Sigmoid colon (tissue), 7 donors: ENCODE measurements at regions of chrX and their contacts with region 1.

Region 1: DNA sequence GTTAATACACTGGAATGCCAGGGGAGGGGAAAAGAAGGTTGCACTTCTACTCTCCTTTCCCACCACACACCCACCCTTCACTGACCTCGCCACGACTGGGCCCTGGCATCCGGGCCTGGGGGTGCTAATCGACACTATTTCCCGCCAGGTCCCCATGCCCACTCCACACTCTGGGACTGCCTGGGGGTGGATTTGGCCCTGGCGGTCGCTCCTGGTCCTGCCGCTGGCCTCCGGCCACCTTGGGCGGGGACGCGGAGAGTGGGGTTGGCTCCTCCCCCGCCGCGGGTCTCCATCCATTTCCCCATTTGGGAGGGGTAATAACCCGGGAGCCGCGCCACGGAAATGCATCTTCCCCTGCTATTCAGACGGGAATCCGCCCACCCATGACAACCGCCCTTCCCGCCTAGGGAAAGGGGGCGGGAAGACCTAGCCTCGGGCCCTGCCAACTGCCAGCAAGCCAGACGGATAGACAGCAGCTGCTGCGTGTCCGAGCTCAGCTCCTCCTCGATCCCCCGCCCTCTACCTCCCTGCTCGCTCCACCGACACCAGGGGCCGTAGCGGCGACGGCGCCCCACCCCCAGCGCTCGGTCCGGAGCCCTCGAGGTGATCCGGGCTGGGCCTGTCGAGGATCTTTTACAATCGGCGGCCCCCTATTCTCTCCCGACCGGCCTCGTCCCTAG is 78.1 kb downstream of the RLIM start:
- DNase-seq: peak; percentile 96
- H3K4me3 ChIP-seq: peak overlapping the region; percentile 35 to 56 (median 49)
- H3K27ac ChIP-seq: peak overlapping the region; percentile 86 to 92 (median 88)
- H3K4me1 ChIP-seq: peaks cover 0 to 18% (median 6%) of the 10 kb centered on the region in 4 donors
- H3K27me3 ChIP-seq: no peaks in the 10 kb centered on the region
- CTCF ChIP-seq: peak; percentile 36 to 60 (median 52)
- EP300 ChIP-seq: no peak
- POLR2A ChIP-seq: no peak

Region 2: DNA sequence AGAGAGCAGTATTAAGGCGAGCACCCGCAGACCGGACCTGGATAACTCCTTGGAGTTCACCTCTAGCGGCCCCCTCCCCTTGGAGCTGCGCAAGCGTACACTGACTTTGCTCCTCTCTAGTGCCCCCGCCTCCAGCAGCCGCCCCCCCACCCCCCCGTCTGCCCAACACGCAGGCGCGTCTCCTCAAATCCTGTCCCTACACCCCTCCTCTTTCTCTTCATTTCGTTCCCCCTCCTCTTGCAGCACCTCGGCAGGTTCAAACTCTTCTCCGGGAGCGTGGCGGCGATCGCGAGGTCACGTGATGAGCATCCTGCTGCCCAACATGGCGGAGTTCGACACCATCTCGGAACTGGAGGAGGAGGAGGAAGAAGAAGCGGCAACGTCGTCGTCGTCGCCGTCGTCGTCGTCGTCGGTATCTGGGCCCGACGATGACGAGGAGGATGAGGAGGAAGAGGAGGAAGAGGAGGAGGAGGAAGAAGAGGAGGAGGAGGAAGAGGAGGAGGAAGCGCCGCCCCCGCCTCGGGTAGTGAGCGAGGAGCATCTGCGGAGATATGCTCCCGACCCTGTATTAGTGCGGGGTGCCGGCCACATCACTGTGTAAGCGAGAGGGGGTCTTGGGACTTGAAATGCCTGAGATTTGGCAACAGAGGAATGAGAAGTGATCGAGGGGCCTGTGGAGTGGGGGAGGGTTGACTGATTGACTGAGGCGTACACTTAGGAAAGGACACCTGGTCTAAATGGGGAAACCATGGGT is 973.1 kb before region 1 on chrX and contains the start of gene CHIC1:
- intact Hi-C with region 1: loop called (anchors 10 kb)
- DNase-seq: peak; percentile 85
- H3K4me3 ChIP-seq: peak within 1 kb of the TSS; percentile 59 to 65 (median 63)
- H3K27ac ChIP-seq: peak within 1 kb of the TSS; percentile 83 to 86 (median 84)
- H3K4me1 ChIP-seq: peaks cover 0 to 9% (median 0%) of the 10 kb centered on the region in 4 donors
- H3K27me3 ChIP-seq: no peaks in the 10 kb centered on the region
- CTCF ChIP-seq: no peak
- EP300 ChIP-seq: no peak
- POLR2A ChIP-seq: no peak
- total RNA-seq, gene CHIC1: 18.3 to 20.7 (median 19.8) TPM

Region 3: GRCh38 chrX:74171465-74171864 is 364.8 kb before region 1 on chrX:
- intact Hi-C with region 1: no loop called
- DNase-seq: no peak
- H3K4me3 ChIP-seq: no peak overlapping the region
- H3K27ac ChIP-seq: no peak overlapping the region
- H3K4me1 ChIP-seq: no peaks in the 10 kb centered on the region
- H3K27me3 ChIP-seq: no peaks in the 10 kb centered on the region
- CTCF ChIP-seq: no peak
- EP300 ChIP-seq: no peak
- POLR2A ChIP-seq: no peak

Region 4: DNA sequence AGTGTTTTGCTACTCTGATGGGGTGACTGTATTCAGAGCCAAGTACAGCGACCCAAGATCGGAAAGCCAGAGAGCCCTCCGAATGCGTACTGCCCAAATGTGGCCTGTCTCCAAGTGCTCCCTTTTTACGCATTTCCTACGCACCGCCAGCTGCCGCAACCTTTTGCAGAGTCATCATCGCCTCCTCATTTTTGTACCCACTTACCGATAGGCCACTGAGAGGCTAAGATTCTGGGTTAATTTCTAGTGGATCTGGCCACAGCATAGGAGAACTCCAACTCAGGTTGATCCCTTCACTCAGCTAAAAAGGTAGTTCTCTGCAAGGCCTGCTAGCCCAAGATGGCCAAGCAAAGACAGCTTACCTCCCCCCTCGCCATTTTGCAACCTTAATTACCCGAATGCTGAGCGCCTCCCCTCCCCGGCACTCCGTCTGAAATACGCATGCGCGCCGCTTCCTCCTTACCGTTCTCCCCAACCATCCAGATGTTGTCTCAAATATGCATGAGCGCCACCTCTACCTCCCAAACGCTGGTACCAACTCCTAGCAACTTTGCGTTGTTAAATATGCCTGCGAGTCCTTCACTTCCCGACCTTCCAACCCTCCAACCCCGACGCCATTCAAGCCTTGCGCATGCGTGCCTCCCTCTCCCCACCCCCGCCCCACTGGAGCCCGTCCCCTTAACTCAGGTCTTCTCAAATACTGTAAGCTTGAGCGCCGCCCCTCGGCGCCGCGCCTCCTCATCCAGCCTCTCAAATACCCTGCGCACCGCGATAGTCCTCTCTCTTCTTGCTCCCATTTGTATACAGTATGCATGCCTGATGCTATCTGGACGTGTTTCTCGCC is 244.1 kb before region 1 on chrX:
- intact Hi-C with region 1: loop called (anchors 2 kb)
- DNase-seq: peak; percentile 95
- H3K4me3 ChIP-seq: peak overlapping the region; percentile 48 to 64 (median 58)
- H3K27ac ChIP-seq: peak overlapping the region; percentile 87 to 93 (median 88)
- H3K4me1 ChIP-seq: peaks cover 0 to 14% (median 3%) of the 10 kb centered on the region in 4 donors
- H3K27me3 ChIP-seq: no peaks in the 10 kb centered on the region
- CTCF ChIP-seq: no peak
- EP300 ChIP-seq: peak in 1 of 4 donors; percentile 44
- POLR2A ChIP-seq: peak in 1 of 2 donors; percentile 14

Region 5: GRCh38 chrX:74382613-74383012 is 153.7 kb before region 1 on chrX:
- intact Hi-C with region 1: loop called (anchors 5 kb)
- DNase-seq: peak; percentile 72
- H3K4me3 ChIP-seq: no peak overlapping the region
- H3K27ac ChIP-seq: no peak overlapping the region
- H3K4me1 ChIP-seq: no peaks in the 10 kb centered on the region
- H3K27me3 ChIP-seq: no peaks in the 10 kb centered on the region
- CTCF ChIP-seq: peak; percentile 40 to 65 (median 56)
- EP300 ChIP-seq: no peak
- POLR2A ChIP-seq: no peak

Region 6: DNA sequence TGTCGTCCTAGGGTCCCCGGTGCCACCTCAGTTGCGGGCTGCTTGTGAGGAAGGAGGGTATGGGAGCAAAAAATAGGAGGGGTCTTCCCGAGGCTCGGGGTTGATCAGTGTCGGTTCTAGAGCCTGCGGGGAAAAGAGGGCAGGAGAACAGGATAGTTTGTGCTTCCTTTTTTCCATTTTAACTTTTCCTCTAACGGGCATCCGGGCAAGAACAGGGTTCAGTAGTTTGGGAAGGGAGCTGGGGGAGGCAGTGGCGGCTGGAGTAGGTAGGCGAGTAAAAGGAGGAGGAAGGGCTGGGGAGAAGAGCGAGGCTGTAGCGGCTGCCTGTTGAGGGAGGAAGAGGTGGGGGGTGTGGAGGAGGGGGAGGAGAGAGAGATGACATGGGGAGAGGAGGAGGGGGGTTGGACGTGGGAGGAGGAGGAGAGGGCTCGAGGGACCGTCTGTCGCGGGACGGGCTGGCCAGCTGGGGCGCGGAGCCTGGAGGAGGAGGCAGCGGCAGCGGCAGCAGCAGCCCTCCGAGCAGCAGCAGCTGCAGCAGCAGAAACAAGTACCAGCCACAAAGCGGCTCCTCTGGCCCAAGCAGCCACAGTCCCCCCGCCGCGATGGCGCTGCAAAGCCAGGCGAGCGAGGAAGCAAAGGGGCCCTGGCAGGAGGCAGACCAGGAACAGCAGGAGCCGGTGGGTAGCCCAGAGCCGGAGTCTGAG is 115.1 kb before region 1 on chrX and contains the start of gene SLC16A2:
- intact Hi-C with region 1: loop called (anchors 1 kb)
- DNase-seq: peak; percentile 93
- H3K4me3 ChIP-seq: peak within 1 kb of the TSS; percentile 38 to 60 (median 57)
- H3K27ac ChIP-seq: peak within 1 kb of the TSS; percentile 89 to 95 (median 90)
- H3K4me1 ChIP-seq: peaks cover 0 to 16% (median 7%) of the 10 kb centered on the region in 4 donors
- H3K27me3 ChIP-seq: no peaks in the 10 kb centered on the region
- CTCF ChIP-seq: no peak
- EP300 ChIP-seq: no peak
- POLR2A ChIP-seq: no peak
- total RNA-seq, gene SLC16A2: 5.3 to 10.5 (median 7.7) TPM

Region 7: GRCh38 chrX:74434336-74434735 is 102.0 kb before region 1 on chrX:
- intact Hi-C with region 1: no loop called
- DNase-seq: no peak
- H3K4me3 ChIP-seq: no peak overlapping the region
- H3K27ac ChIP-seq: no peak overlapping the region
- H3K4me1 ChIP-seq: no peaks in the 10 kb centered on the region
- H3K27me3 ChIP-seq: no peaks in the 10 kb centered on the region
- CTCF ChIP-seq: no peak
- EP300 ChIP-seq: no peak
- POLR2A ChIP-seq: no peak

Region 8: DNA sequence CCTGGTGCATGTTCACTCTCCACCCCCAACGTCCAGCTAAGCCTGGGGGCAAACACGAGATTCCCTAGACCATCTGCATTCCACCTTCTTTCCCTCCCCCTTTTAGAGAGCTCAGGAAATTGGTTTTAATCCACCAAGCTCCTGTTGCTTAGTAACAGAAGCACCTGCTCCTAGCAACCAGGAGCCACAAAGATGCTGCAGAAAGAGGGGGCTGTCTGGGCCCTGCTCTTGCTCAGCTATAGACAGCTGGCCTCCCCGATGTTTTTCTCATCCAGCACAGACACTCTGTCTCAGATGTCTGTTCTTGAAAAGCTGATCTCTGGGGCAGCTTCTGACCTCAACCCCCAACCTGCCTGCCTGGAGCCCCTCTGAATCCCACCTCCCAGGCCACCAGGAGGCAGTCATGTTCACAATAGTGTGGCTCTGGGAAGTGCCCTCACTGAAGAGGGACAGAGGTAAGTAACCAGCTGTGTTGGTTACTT is 43.5 kb before region 1 on chrX:
- intact Hi-C with region 1: no loop called
- DNase-seq: no peak
- H3K4me3 ChIP-seq: no peak overlapping the region
- H3K27ac ChIP-seq: no peak overlapping the region
- H3K4me1 ChIP-seq: no peaks in the 10 kb centered on the region
- H3K27me3 ChIP-seq: no peaks in the 10 kb centered on the region
- CTCF ChIP-seq: no peak
- EP300 ChIP-seq: no peak
- POLR2A ChIP-seq: no peak